OCI-LY7 (cell line): ENCODE measurements at regions of chr5 and their contacts with region 1.

Region 1: GRCh38 chr5:111742177-111742994 is 14.6 kb downstream of the NREP start:
- DNase-seq: no peak
- H3K4me3 ChIP-seq: no peak overlapping the region
- H3K27ac ChIP-seq: peak overlapping the region; percentile 63
- H3K4me1 ChIP-seq: peaks cover 55% of the 10 kb centered on the region
- CTCF ChIP-seq: no peak

Region 2: DNA sequence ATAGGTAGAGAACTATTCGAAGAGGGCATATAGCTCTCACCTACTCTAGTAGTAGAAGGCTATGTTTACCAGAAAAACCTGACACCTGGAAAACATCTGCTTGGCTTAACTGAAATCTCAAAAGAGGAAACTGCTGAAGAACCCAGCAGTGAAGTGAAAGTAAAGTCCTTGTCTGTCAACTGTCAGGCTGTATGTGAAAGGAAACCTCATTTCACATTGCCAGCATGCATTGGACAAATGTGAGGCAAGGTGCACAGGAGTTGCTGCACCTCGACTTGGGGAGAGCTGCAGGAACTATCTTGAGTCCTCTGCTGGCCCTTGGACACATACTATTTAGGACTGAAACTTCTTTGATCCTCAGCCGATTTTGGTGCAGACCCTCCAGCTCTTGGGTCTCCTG is 38.7 kb before region 1 on chr5:
- CTCF ChIA-PET with region 1: no interaction called
- POLR2A ChIA-PET with region 1: interaction called, 19 read pairs
- intact Hi-C with region 1: loop called (anchors 1 kb)
- DNase-seq: peak; percentile 93
- H3K4me3 ChIP-seq: peak overlapping the region; percentile 67
- H3K27ac ChIP-seq: peak overlapping the region; percentile 98
- H3K4me1 ChIP-seq: peaks cover 62% of the 10 kb centered on the region
- CTCF ChIP-seq: no peak

Region 3: GRCh38 chr5:111719773-111720172 is 22.6 kb before region 1 on chr5:
- CTCF ChIA-PET with region 1: no interaction called
- POLR2A ChIA-PET with region 1: interaction called, 10 read pairs
- intact Hi-C with region 1: no loop called
- DNase-seq: no peak
- H3K4me3 ChIP-seq: no peak overlapping the region
- H3K27ac ChIP-seq: no peak overlapping the region
- H3K4me1 ChIP-seq: no peaks in the 10 kb centered on the region
- CTCF ChIP-seq: no peak

Region 4: DNA sequence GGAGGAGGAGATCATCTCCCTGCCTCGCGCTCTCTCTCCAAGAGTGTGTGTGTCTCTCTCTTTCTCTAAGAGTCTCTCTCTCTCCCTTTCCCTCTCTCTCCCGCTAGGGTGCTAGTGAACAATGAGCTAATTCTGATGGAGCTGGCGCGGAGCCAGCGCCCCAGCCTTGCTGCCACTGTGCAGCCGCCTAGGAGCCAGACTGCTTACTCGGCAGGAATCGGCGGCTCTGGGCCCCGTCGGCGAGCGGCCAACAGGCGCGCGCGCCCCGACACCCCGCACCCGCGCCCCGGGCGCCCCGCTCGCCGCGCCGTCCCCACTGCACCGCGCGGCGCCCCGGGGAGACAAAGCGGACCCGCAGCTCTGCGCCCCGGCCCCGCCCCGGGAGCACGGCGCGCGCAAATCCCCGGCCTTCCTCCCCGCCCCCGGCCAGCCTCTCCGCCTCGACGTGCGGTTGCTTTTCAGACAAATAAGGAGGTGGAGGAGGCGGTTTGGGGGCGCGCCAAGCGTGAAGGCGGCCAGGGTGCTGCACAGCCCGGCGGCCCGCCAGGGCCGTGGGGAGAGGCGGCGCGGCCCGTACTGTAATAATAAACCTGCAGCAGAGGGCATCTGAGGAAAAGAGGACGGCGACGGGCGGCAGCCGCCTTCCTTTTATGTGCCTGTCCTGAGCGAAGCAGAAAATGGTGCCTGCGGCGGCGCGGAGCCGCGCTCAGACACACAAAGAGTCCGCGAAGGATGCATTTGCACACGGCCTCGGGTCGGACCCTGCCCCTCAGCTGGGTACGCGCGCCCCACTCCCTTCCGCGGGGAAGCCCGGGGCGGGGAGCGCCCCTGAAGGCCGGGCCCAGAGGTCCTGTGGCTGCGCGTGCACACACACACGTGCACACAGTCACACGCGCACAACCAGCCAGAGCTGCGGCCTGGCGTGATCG is 15.2 kb after region 1 on chr5:
- CTCF ChIA-PET with region 1: no interaction called
- POLR2A ChIA-PET with region 1: interaction called, 7 read pairs
- intact Hi-C with region 1: loop called (anchors 2 kb)
- DNase-seq: peak; percentile 90
- H3K4me3 ChIP-seq: peak overlapping the region; percentile 79
- H3K27ac ChIP-seq: peak overlapping the region; percentile 88
- H3K4me1 ChIP-seq: peaks cover 36% of the 10 kb centered on the region
- CTCF ChIP-seq: peak; percentile 42; the same call in 1 of the 2 replicates

Region 5: GRCh38 chr5:112737463-112738190 is 995.2 kb after region 1 on chr5 and contains the start of gene APC:
- CTCF ChIA-PET with region 1: no interaction called
- POLR2A ChIA-PET with region 1: no interaction called
- intact Hi-C with region 1: no loop called
- DNase-seq: peak; percentile 88
- H3K4me3 ChIP-seq: peak within 1 kb of the TSS; percentile 85
- H3K27ac ChIP-seq: peak within 1 kb of the TSS; percentile 37
- H3K4me1 ChIP-seq: peaks cover 18% of the 10 kb centered on the region
- CTCF ChIP-seq: no peak
- total RNA-seq, gene APC: 33.1 and 41.4 TPM in 2 replicates